Panc1 (cell line): ENCODE measurements at regions of chr7 and their contacts with region 1.

Region 1: GRCh38 chr7:28096713-28097112 is 83.9 kb downstream of the JAZF1 start:
- DNase-seq: no peak
- ATAC-seq: peak; percentile 80; the same call in 1 of the 2 replicates
- H3K4me3 ChIP-seq: no peak overlapping the region
- H3K27ac ChIP-seq: no peak overlapping the region
- H3K4me1 ChIP-seq: no peaks in the 10 kb centered on the region
- H3K27me3 ChIP-seq: no peaks in the 10 kb centered on the region
- CTCF ChIP-seq: peak; percentile 91

Region 2: DNA sequence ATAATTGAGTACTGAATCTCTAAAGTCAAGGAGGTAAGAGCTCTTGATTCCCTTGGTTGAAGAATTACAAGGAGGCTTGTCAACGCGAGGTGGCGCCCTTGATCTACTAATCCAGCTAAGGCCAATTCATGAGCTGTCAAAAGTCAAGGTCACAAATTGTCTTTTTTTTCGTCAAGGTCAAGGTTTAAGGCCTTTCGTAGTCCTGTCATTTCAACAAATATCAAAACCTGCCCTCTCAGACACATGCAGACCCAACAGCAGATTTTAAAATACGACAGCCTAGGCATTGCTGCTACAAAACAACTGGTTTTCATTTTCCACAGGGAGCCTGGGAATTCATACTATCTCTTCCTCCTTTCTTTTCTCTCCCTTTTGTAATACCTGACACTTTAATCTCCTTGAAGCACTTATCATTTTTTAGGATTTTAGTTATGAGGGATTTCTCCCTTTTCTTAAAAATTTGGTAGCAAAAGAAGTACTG is 900.4 kb before region 1 on chr7:
- CTCF ChIA-PET with region 1: interaction called, 5 read pairs
- POLR2A ChIA-PET with region 1: no interaction called
- in situ Hi-C with region 1: no loop called
- intact Hi-C with region 1: loop called (anchors 5 kb)
- DNase-seq: peak; percentile 66
- ATAC-seq: no peak
- H3K4me3 ChIP-seq: no peak overlapping the region
- H3K27ac ChIP-seq: no peak overlapping the region
- H3K4me1 ChIP-seq: peaks cover 10% of the 10 kb centered on the region
- H3K27me3 ChIP-seq: no peaks in the 10 kb centered on the region; the same call in 1 of the 2 replicates
- CTCF ChIP-seq: peak; percentile 89

Region 3: DNA sequence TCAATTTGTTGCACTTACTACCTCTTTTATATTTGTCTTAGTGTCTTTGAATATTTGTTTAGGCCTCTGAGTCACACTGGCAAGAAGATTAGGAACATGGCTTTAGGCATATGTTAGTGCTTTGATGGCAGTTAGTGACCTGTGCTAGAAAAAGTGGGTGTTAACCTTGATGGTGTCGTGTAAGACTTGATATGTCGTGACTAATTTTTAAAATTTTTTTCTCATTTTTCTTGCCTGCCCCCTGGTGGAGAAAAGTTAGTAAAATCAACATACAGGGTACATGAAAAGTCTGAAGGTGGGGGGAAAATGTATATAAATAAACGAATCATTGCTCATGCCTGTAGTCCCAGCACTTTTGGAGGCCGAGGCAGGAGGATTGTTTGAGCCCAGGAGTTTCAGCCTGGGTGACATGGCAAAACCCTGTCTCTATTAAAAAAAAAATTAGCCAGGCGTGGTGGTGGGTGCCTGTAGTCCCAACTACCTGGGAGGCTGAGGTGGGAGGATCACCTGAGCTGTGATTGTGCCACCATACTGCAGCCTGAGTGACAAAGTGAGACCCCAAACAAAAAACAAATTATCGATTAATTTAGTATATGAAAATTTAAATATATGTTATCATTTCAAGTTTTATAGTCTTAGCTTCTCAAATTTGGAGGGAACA is 312.2 kb before region 1 on chr7:
- CTCF ChIA-PET with region 1: no interaction called
- POLR2A ChIA-PET with region 1: no interaction called
- in situ Hi-C with region 1: no loop called
- intact Hi-C with region 1: loop called (anchors 10 kb)
- DNase-seq: peak; percentile 81
- ATAC-seq: peak; percentile 95
- H3K4me3 ChIP-seq: no peak overlapping the region
- H3K27ac ChIP-seq: peak overlapping the region; percentile 36; the same call in 1 of the 2 replicates
- H3K4me1 ChIP-seq: peaks cover 26% of the 10 kb centered on the region
- H3K27me3 ChIP-seq: no peaks in the 10 kb centered on the region
- CTCF ChIP-seq: peak; percentile 83

Region 4: DNA sequence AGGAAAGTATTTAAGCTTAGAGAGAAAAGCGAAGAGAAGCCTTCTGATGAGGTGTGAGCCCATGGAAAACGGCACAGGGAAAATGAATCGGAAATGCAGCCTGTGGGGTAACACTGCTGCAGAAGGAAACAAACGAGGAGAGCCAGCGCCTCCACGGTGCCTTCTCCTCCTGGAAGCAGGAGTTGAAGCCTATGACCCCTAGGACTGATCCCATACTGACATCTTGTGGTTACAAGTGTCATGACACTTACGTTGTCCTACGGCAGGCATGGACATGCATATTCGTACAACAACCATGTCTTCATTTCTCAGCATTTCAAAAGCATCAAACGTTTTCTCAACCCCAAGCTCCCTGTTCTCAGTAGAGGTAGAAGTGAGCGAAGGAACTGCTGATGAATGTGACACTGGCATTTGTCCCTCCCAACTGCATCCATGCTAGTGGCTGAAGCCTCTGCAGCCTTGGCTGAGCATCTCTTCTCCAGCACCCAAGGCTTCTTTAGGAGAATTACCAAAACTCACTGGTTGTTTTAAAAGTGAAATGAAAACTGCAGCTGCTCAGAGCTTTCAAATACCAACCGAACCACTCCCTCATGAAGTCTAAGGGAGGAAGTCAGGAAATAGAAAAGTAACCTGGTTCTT is 76.3 kb before region 1 on chr7:
- CTCF ChIA-PET with region 1: interaction called, 4 read pairs
- POLR2A ChIA-PET with region 1: no interaction called
- in situ Hi-C with region 1: no loop called
- intact Hi-C with region 1: loop called (anchors 5 kb)
- DNase-seq: peak; percentile 81
- ATAC-seq: peak; percentile 95
- H3K4me3 ChIP-seq: peak overlapping the region in 1 of 2 experiments; percentile 21; a peak in 1 of 4 replicates
- H3K27ac ChIP-seq: peak overlapping the region; percentile 66
- H3K4me1 ChIP-seq: peaks cover 8% of the 10 kb centered on the region
- H3K27me3 ChIP-seq: no peaks in the 10 kb centered on the region
- CTCF ChIP-seq: peak; percentile 96